Heart left ventricle (tissue), 16 donors: ENCODE measurements at regions of chr10 and their contacts with region 1.

Region 1: GRCh38 chr10:63206997-63207811 is 74.1 kb downstream of the NRBF2 start:
- DNase-seq: peak in 4 of 5 donors; percentile 40 to 50 (median 44)
- ATAC-seq: peak; percentile 65 to 84 (median 80)
- H3K4me3 ChIP-seq: peak overlapping the region in 6 of 12 donors; percentile 5 to 20 (median 14)
- H3K27ac ChIP-seq: peak overlapping the region; percentile 29 to 85 (median 67)
- H3K4me1 ChIP-seq: peaks cover 3 to 78% (median 60%) of the 10 kb centered on the region in 12 donors
- H3K27me3 ChIP-seq: no peaks in the 10 kb centered on the region
- CTCF ChIP-seq: no peak
- POLR2A ChIP-seq: no peak

Region 2: GRCh38 chr10:63173468-63174232 is 33.6 kb before region 1 on chr10:
- intact Hi-C with region 1: loop called in 2 of 10 experiments (anchors 5 kb)
- DNase-seq: no peak
- ATAC-seq: peak in 2 of 4 donors; percentile 44 to 45
- H3K4me3 ChIP-seq: no peak overlapping the region
- H3K27ac ChIP-seq: peak overlapping the region in 1 of 12 donors; percentile 73
- H3K4me1 ChIP-seq: peaks cover 0 to 60% (median 9%) of the 10 kb centered on the region in 12 donors
- H3K27me3 ChIP-seq: no peaks in the 10 kb centered on the region
- CTCF ChIP-seq: no peak
- POLR2A ChIP-seq: no peak

Region 3: GRCh38 chr10:63465293-63466143 is 258.3 kb after region 1 on chr10 and contains the start of gene JMJD1C:
- intact Hi-C with region 1: loop called in 4 of 10 experiments (anchors 5 to 10 kb)
- DNase-seq: peak; percentile 84 to 91 (median 86)
- ATAC-seq: peak; percentile 69 to 94 (median 90)
- H3K4me3 ChIP-seq: peak within 1 kb of the TSS; percentile 65 to 93 (median 86)
- H3K27ac ChIP-seq: peak within 1 kb of the TSS; percentile 87 to 96 (median 92)
- H3K4me1 ChIP-seq: peaks cover 0 to 40% (median 18%) of the 10 kb centered on the region in 12 donors
- H3K27me3 ChIP-seq: no peaks in the 10 kb centered on the region
- CTCF ChIP-seq: peak in 2 of 12 donors; percentile 7 to 40
- POLR2A ChIP-seq: peak in 1 of 2 donors; percentile 60
- total RNA-seq, gene JMJD1C: 27.0 to 54.6 (median 42.7) TPM

Region 4: GRCh38 chr10:63521416-63522276 is 314.4 kb after region 1 on chr10:
- intact Hi-C with region 1: loop called in 3 of 10 experiments (anchors 5 kb)
- DNase-seq: peak; percentile 69 to 88 (median 76)
- ATAC-seq: peak; percentile 15 to 91 (median 82)
- H3K4me3 ChIP-seq: peak overlapping the region; percentile 63 to 91 (median 78)
- H3K27ac ChIP-seq: peak overlapping the region; percentile 97 to 99 (median 98)
- H3K4me1 ChIP-seq: peaks cover 4 to 64% (median 49%) of the 10 kb centered on the region in 12 donors
- H3K27me3 ChIP-seq: no peaks in the 10 kb centered on the region
- CTCF ChIP-seq: no peak
- POLR2A ChIP-seq: peak in 1 of 2 donors; percentile 35